ENCODE measurements at regions of chr17 and their contacts with region 1.

Region 1: GRCh38 chr17:36184023-36184765 is 7.8 kb upstream of the TBC1D3B start:
- DNase-seq: peak in 1 of 2 donors; percentile 72
- ATAC-seq: no peak
- H3K4me3 ChIP-seq: no peak overlapping the region
- H3K27ac ChIP-seq: no peak overlapping the region
- H3K4me1 ChIP-seq: no peaks in the 10 kb centered on the region
- H3K27me3 ChIP-seq: no peaks in the 10 kb centered on the region

Region 2: GRCh38 chr17:36107660-36108059 is 76.5 kb before region 1 on chr17:
- intact Hi-C with region 1: loop called in 1 of 2 experiments (anchors 1 kb)
- DNase-seq: no peak
- ATAC-seq: no peak
- H3K4me3 ChIP-seq: no peak overlapping the region
- H3K27ac ChIP-seq: no peak overlapping the region
- H3K4me1 ChIP-seq: no peaks in the 10 kb centered on the region
- H3K27me3 ChIP-seq: peaks cover 0 to 1% of the 10 kb centered on the region in 2 donors

Region 3: GRCh38 chr17:36117505-36118382 is 66.5 kb before region 1 on chr17:
- intact Hi-C with region 1: loop called in 1 of 2 experiments (anchors 2 kb)
- DNase-seq: no peak
- ATAC-seq: no peak
- H3K4me3 ChIP-seq: no peak overlapping the region
- H3K27ac ChIP-seq: no peak overlapping the region
- H3K4me1 ChIP-seq: no peaks in the 10 kb centered on the region
- H3K27me3 ChIP-seq: no peaks in the 10 kb centered on the region

Region 4: DNA sequence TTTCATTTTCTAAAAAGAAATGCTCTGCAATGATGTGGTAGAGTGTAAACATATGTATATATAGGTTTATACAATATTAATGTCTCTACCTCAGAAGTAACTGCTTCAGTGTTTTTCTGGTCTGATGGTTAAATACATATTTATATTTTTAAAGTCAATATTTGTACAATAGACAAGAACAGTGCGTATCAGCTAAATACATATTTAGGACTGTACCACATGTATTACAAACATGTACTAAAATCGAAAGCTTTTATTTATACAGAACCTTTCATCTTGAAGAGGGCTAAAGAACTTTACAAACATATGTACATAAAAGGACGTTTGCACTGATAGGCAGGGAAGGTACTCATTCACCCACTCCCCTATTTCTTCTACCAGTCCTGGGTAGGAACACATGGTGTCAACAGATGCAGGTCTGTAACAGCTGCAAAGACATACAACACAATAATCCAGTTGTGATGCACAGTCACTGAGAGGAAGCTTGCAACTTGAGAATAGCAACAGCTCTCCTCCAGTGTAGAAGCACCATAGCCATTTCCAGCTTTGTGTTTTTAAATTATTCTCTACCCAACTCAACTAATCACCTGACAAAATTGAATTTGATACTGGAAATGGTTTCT is 984.6 kb after region 1 on chr17:
- intact Hi-C with region 1: no loop called
- DNase-seq: no peak
- ATAC-seq: no peak
- H3K4me3 ChIP-seq: no peak overlapping the region
- H3K27ac ChIP-seq: no peak overlapping the region
- H3K4me1 ChIP-seq: no peaks in the 10 kb centered on the region
- H3K27me3 ChIP-seq: no peaks in the 10 kb centered on the region

Measured in aorta (tissue), 5 donors.